Mammary epithelial cell (primary cell): ENCODE measurements at regions of chr2 and their contacts with region 1.

Region 1: GRCh38 chr2:171416009-171416926 is 17.5 kb downstream of the METTL8 start:
- DNase-seq: peak; percentile 95
- H3K4me3 ChIP-seq: no peak overlapping the region
- H3K27ac ChIP-seq: peak overlapping the region; percentile 60
- H3K4me1 ChIP-seq: peaks cover 12% of the 10 kb centered on the region
- H3K27me3 ChIP-seq: no peaks in the 10 kb centered on the region
- CTCF ChIP-seq: peak; percentile 87 to 97

Region 2: GRCh38 chr2:170928824-170929685 is 487.2 kb before region 1 on chr2 and contains the start of gene GORASP2:
- CTCF ChIA-PET with region 1: no interaction called
- dilution Hi-C with region 1: no loop called
- in situ Hi-C with region 1: no loop called
- intact Hi-C with region 1: loop called (anchors 1 kb)
- DNase-seq: peak; percentile 99
- H3K4me3 ChIP-seq: peak within 1 kb of the TSS; percentile 54 to 86 (median 85)
- H3K27ac ChIP-seq: peak within 1 kb of the TSS; percentile 89
- H3K4me1 ChIP-seq: peaks cover 14% of the 10 kb centered on the region
- H3K27me3 ChIP-seq: no peaks in the 10 kb centered on the region
- CTCF ChIP-seq: peak; percentile 85
- total RNA-seq, gene GORASP2: 63.3 to 94.9 TPM

Region 3: DNA sequence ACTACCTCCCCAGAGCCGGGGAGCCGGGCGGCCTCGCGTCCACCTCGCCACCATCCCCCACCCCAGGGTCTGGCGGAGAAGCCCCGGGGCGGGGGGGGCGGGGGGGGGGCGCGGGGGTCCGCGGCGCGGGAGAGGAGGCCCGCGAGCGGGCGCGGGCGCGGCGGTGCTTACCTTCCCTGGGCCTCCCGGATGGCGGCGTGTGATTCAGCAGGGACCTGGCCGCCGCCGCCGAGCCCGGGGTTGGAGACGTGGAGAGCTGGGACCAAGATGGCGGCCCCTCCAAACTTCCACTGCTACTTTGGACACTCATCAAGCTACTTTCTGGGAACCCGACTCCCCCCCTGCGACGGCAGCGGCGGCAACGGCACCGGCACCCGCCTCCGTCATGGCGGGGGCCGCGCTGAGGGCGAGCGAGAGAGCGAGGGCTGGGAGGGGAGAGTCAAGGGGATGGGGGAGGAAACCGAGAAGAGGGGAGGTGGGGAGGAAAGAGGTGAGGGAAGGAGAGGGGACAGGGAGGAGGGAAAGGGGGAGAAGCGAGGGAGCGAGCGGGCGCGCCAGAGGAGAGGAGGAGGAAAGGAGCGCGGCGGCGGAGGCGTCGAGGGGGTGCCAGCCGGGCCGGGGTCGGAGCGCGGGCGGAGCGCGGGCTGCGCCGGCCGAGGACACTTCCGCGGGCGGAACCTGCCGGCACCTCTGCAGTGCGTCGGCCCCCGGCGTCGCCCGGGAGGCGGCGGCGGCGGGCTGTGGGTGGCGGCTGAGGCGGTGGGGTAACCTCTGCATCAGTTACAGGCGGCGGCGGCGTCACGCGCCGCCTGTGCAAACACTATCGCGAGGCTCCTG is 255.9 kb before region 1 on chr2 and contains the start of gene TLK1:
- CTCF ChIA-PET with region 1: interaction called, 6 read pairs
- dilution Hi-C with region 1: no loop called
- in situ Hi-C with region 1: loop called (anchors 10 to 25 kb)
- intact Hi-C with region 1: loop called (anchors 1 kb)
- DNase-seq: peak; percentile 75
- H3K4me3 ChIP-seq: peak within 1 kb of the TSS; percentile 83 to 97 (median 93)
- H3K27ac ChIP-seq: peak within 1 kb of the TSS; percentile 72
- H3K4me1 ChIP-seq: no peaks in the 10 kb centered on the region
- H3K27me3 ChIP-seq: no peaks in the 10 kb centered on the region
- CTCF ChIP-seq: peak in 1 of 2 donors; percentile 26
- total RNA-seq, gene TLK1: 15.8 to 60.1 TPM

Region 4: DNA sequence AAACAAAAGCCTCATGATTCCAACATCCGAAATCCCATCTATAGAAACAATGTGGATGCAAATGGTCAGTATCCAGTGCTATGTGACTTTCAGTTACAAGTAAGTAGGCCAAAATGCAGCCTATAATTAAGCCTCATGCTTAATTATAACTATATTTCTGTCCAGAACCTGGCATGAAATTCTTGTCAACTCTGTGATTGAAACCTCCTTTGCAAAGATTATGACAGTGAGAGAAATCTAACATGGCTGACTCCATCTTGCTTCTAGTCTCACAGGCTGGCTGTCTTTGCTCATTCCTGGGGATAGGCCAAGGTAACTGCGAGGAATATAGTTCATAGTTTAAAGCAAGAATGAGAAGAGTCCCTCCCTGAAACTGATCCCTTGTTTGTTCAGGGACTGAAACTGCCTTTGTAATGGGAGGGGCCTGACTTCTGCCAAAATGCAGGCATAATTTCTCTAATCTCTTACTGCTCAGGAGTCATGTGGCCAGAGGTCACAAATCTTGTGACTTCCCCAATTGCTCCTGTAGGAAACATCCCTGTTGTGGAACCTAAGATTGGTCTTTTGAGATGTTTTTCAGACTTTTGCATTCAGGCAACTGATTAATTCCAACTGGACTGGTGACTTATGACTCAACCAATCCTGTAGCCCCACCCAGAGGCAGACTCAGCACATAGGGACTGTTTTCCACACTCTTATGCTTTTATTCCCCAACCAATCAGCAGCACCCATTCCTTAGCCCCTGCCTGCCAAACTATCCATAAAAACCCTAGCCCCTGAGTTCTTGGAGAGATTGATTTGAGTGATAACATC is 171.1 kb before region 1 on chr2:
- CTCF ChIA-PET with region 1: interaction called, 3 read pairs
- dilution Hi-C with region 1: no loop called
- in situ Hi-C with region 1: no loop called
- intact Hi-C with region 1: loop called (anchors 1 kb)
- DNase-seq: peak; percentile 37
- H3K4me3 ChIP-seq: no peak overlapping the region
- H3K27ac ChIP-seq: no peak overlapping the region
- H3K4me1 ChIP-seq: peaks cover 5% of the 10 kb centered on the region
- H3K27me3 ChIP-seq: no peaks in the 10 kb centered on the region
- CTCF ChIP-seq: peak; percentile 9 to 35

Region 5: DNA sequence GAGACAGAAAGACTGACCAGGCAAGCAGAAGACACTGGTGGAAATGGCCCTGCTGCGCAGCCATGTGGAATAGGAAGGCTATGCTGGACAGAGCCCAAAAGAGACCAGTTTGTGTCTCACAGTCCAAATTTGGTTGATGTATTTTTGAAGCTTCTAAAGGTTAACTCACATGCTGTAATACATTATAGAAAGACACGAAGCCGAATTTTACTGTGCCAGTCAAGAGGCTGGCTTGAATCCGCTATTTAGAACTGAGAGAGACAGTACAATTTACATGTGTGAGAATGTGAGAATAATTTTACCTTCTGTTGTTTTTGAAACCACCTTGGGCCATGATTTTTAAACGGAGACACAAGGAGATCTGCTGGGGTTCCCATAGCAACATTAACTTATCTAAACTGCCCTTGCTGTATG is 96.1 kb before region 1 on chr2:
- CTCF ChIA-PET with region 1: interaction called, 3 read pairs
- dilution Hi-C with region 1: no loop called
- in situ Hi-C with region 1: no loop called
- intact Hi-C with region 1: loop called (anchors 5 kb)
- DNase-seq: no peak
- H3K4me3 ChIP-seq: no peak overlapping the region
- H3K27ac ChIP-seq: no peak overlapping the region
- H3K4me1 ChIP-seq: no peaks in the 10 kb centered on the region
- H3K27me3 ChIP-seq: no peaks in the 10 kb centered on the region
- CTCF ChIP-seq: no peak